ENCODE measurements at regions of chr1 and their contacts with region 1.

Region 1: GRCh38 chr1:64242895-64243756 is 39.7 kb downstream of the UBE2U start:
- DNase-seq: peak in 1 of 2 experiments; percentile 6
- H3K4me3 ChIP-seq: no peak overlapping the region
- H3K4me3 Mint-ChIP-seq: no peak overlapping the region
- H3K27ac Mint-ChIP-seq: no peak overlapping the region
- H3K4me1 ChIP-seq: peaks cover 5% of the 10 kb centered on the region; the same call in 1 of the 2 replicates
- H3K4me1 Mint-ChIP-seq: peaks cover 6% of the 10 kb centered on the region
- H3K27me3 ChIP-seq: no peaks in the 10 kb centered on the region
- H3K27me3 Mint-ChIP-seq: no peaks in the 10 kb centered on the region
- CTCF ChIP-seq: peak in 1 of 2 experiments; percentile 13

Region 2: GRCh38 chr1:63557365-63557987 is 685.6 kb before region 1 on chr1:
- CTCF ChIA-PET with region 1: no interaction called
- POLR2A ChIA-PET with region 1: no interaction called
- intact Hi-C with region 1: loop called (anchors 5 kb)
- DNase-seq: peak in 1 of 2 experiments; percentile 40
- H3K4me3 ChIP-seq: no peak overlapping the region
- H3K4me3 Mint-ChIP-seq: no peak overlapping the region
- H3K27ac Mint-ChIP-seq: no peak overlapping the region
- H3K4me1 ChIP-seq: no peaks in the 10 kb centered on the region
- H3K4me1 Mint-ChIP-seq: no peaks in the 10 kb centered on the region
- H3K27me3 ChIP-seq: no peaks in the 10 kb centered on the region
- H3K27me3 Mint-ChIP-seq: no peaks in the 10 kb centered on the region
- CTCF ChIP-seq: peak; percentile 47 to 55

Region 3: DNA sequence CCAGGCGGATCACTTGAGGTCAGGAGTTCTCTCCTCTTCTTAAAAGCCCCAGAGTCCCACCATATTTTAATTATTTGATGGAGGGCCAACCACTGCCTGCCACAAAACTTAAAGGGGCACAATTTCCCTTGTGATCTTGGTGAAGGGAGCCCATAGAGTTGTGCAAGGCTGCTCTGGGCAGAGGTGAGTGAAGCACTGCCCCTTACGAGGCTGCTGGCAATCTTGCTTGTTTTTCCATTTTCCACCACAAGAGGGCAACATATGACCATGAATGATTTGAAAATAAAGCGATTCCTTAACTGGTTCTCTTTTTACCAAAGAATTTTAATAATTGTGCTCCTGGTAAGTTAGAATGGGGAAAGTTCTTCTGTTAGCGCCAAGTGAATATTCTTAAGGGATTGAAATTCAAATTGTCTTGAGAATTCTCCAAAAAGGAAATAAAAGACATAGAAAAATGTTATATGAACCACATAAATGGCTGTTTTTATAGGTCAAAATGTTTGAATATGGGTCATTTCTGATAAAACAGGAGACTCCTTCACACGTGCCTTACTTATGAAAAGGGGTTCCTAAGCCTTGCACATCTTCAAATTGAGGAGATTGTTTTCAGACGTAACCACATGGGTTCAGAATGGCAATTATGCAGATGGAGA is 627.2 kb before region 1 on chr1:
- CTCF ChIA-PET with region 1: interaction called, 3 read pairs
- POLR2A ChIA-PET with region 1: no interaction called
- intact Hi-C with region 1: loop called (anchors 1 kb)
- DNase-seq: peak; percentile 40 to 74
- H3K4me3 ChIP-seq: no peak overlapping the region
- H3K4me3 Mint-ChIP-seq: no peak overlapping the region
- H3K27ac Mint-ChIP-seq: no peak overlapping the region
- H3K4me1 ChIP-seq: no peaks in the 10 kb centered on the region; the same call in 1 of the 2 replicates
- H3K4me1 Mint-ChIP-seq: peaks cover 11% of the 10 kb centered on the region
- H3K27me3 ChIP-seq: no peaks in the 10 kb centered on the region
- H3K27me3 Mint-ChIP-seq: no peaks in the 10 kb centered on the region
- CTCF ChIP-seq: peak; percentile 37 to 59

Region 4: GRCh38 chr1:63691701-63692425 is 551.3 kb before region 1 on chr1:
- CTCF ChIA-PET with region 1: interaction called, 6 read pairs
- POLR2A ChIA-PET with region 1: no interaction called
- intact Hi-C with region 1: loop called (anchors 5 kb)
- DNase-seq: peak; percentile 62 to 73
- H3K4me3 ChIP-seq: no peak overlapping the region
- H3K4me3 Mint-ChIP-seq: no peak overlapping the region
- H3K27ac Mint-ChIP-seq: no peak overlapping the region
- H3K4me1 ChIP-seq: peaks cover 5% of the 10 kb centered on the region; the same call in 1 of the 2 replicates
- H3K4me1 Mint-ChIP-seq: peaks cover 18% of the 10 kb centered on the region
- H3K27me3 ChIP-seq: no peaks in the 10 kb centered on the region
- H3K27me3 Mint-ChIP-seq: no peaks in the 10 kb centered on the region
- CTCF ChIP-seq: peak; percentile 54 to 66

Region 5: GRCh38 chr1:63920154-63921117 is 322.7 kb before region 1 on chr1:
- CTCF ChIA-PET with region 1: no interaction called
- POLR2A ChIA-PET with region 1: no interaction called
- intact Hi-C with region 1: loop called (anchors 5 kb)
- DNase-seq: peak; percentile 55 to 75
- H3K4me3 ChIP-seq: no peak overlapping the region
- H3K4me3 Mint-ChIP-seq: peak overlapping the region; percentile 45
- H3K27ac Mint-ChIP-seq: peak overlapping the region; percentile 72
- H3K4me1 ChIP-seq: peaks cover 65% of the 10 kb centered on the region
- H3K4me1 Mint-ChIP-seq: peaks cover 53% of the 10 kb centered on the region
- H3K27me3 ChIP-seq: no peaks in the 10 kb centered on the region
- H3K27me3 Mint-ChIP-seq: no peaks in the 10 kb centered on the region
- CTCF ChIP-seq: no peak

Region 6: DNA sequence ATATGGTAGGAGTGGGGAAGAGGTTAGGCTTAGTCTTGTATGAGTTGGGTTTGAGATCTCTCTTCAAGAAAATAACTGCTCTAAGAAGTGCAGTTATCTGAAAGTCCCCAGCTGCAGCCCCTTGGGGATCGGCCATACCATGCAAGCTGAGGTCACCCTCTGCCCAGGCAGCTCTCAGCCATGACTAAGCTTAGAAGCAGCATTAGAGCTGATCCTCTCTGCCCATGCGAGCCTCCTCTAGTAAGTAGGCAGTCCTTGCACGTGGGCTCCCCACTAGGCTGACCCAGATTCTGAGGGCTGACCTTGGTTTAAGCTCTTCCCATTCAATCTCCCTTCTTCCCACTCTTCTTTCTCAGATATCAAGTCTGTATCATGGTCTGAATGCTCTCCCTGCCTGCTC is 160.7 kb before region 1 on chr1:
- CTCF ChIA-PET with region 1: no interaction called
- POLR2A ChIA-PET with region 1: no interaction called
- intact Hi-C with region 1: no loop called
- DNase-seq: no peak
- H3K4me3 ChIP-seq: no peak overlapping the region
- H3K4me3 Mint-ChIP-seq: no peak overlapping the region
- H3K27ac Mint-ChIP-seq: no peak overlapping the region
- H3K4me1 ChIP-seq: no peaks in the 10 kb centered on the region
- H3K4me1 Mint-ChIP-seq: no peaks in the 10 kb centered on the region
- H3K27me3 ChIP-seq: no peaks in the 10 kb centered on the region
- H3K27me3 Mint-ChIP-seq: no peaks in the 10 kb centered on the region
- CTCF ChIP-seq: no peak

Region 7: DNA sequence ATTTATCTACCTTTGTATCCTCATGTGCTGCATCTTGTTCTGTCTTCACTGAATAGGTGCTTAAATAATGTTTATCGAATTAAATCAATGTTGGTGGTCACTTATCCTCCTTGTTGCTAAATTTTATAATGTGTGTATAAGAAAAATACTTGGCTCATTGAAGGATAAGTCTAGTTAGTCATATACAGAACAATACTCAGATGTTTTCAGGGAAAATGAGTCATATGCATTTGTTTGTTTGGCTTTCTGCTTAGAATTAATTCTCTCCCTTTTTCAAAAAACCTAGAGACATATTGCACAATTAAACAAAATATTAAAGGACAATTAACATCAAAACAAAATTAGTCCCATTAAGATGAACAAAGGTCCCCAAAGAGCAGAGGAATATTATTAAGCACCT is 49.3 kb after region 1 on chr1:
- CTCF ChIA-PET with region 1: no interaction called
- POLR2A ChIA-PET with region 1: no interaction called
- intact Hi-C with region 1: no loop called
- DNase-seq: no peak
- H3K4me3 ChIP-seq: no peak overlapping the region
- H3K4me3 Mint-ChIP-seq: no peak overlapping the region
- H3K27ac Mint-ChIP-seq: no peak overlapping the region
- H3K4me1 ChIP-seq: no peaks in the 10 kb centered on the region
- H3K4me1 Mint-ChIP-seq: no peaks in the 10 kb centered on the region
- H3K27me3 ChIP-seq: no peaks in the 10 kb centered on the region
- H3K27me3 Mint-ChIP-seq: peaks cover 3% of the 10 kb centered on the region
- CTCF ChIP-seq: no peak

Measured in Caco-2 (cell line).